Endothelial cell of umbilical vein (primary cell): ENCODE measurements at regions of chr20 and their contacts with region 1.

Region 1: DNA sequence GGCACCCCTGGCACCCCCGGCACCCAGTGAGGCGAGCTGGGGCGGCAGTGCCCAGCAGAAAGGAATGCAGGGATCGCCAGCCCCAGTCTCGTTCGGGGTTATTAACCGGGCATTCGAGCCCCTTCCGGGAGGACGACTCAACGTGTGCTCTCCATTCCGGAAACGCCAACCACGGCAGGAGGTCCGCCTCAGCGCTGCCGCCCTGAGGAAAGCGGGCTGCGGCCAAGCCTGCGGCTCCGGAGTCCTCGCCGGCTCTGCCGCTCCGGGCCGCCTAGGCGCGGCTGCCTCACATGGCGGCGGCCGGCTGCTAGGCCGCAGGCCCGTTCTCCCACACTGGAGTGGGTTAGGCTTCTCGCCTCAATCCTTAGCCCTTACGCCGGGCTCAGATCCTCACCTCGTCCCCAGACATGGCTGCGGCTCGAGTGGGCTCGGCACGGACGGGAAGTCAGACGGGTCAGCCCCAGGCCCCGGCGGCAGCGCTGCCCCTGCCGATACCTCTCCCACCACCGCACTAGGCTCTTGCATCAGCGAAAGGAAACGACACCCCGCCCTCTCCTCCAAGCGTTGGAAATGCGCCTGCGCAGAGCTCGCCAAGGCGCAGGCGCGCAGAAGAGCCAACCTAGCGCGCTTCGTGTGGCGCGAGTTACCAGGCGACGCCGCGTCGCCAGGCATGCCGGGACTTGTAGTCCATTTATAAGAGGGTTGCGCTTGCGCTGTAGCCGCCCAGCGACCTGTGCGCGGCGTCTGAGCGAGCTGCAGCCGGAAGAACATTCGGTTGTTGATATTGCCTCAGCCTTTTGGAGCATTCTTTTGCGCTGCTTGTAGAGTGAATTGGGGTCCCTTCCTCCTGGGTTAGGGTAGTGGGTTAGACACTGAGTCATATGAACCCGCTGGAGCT is at the start of gene EIF2S2:
- DNase-seq: peak; percentile 99
- H3K4me3 ChIP-seq: peak within 1 kb of the TSS; percentile 69 to 95 (median 93)
- H3K27ac ChIP-seq: peak within 1 kb of the TSS; percentile 78
- H3K4me1 ChIP-seq: peaks cover 27% of the 10 kb centered on the region
- H3K27me3 ChIP-seq: no peaks in the 10 kb centered on the region
- CTCF ChIP-seq: no peak
- POLR2A ChIP-seq: peak; percentile 97
- total RNA-seq, gene EIF2S2: 99.3 and 102 TPM in 2 replicates

Region 2: DNA sequence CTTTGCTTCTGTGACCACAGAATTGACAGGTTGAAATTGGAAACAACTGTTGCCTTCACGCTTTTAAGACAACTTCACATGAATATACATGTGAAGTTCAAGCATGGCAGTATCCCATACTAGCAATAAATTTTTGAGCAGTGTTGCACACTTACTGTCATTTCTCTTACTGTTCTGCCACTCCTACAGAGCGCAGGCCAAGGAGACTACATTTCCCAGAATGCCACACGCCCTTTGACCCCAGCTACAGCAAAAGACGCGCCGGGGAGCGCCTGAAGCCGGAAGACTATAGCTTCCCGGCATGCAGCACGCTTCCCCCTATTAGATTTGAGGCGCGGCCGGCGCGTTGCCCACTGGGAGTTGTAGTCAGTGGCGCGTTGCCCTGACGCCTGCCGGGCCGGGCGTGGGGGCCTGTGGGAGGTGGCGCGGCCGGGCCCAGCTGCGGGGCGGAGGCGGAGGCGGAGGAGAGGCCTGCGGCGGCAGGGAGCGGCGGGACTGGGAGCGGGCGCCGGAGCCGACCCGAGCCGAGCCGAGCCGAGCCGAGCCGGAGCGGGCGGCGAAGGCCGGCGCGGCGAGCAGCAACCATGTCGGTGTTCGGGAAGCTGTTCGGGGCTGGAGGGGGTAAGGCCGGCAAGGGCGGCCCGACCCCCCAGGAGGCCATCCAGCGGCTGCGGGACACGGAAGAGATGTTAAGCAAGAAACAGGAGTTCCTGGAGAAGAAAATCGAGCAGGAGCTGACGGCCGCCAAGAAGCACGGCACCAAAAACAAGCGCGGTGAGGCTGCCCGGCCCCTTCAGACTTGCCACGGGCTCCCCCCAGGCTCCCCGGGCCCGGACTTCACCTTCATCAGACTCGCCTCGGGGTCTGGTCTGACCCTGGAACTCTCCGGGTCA is 300.8 kb before region 1 on chr20 and contains the start of gene CHMP4B:
- CTCF ChIA-PET with region 1: no interaction called
- POLR2A ChIA-PET with region 1: interaction called, 4 read pairs
- dilution Hi-C with region 1: no loop called
- intact Hi-C with region 1: loop called (anchors 1 kb)
- DNase-seq: peak; percentile 98
- H3K4me3 ChIP-seq: peak within 1 kb of the TSS; percentile 60 to 86 (median 83)
- H3K27ac ChIP-seq: peak within 1 kb of the TSS; percentile 96
- H3K4me1 ChIP-seq: peaks cover 23% of the 10 kb centered on the region
- H3K27me3 ChIP-seq: no peaks in the 10 kb centered on the region
- CTCF ChIP-seq: no peak
- POLR2A ChIP-seq: peak; percentile 69
- total RNA-seq, gene CHMP4B: 105 and 112 TPM in 2 replicates

Region 3: DNA sequence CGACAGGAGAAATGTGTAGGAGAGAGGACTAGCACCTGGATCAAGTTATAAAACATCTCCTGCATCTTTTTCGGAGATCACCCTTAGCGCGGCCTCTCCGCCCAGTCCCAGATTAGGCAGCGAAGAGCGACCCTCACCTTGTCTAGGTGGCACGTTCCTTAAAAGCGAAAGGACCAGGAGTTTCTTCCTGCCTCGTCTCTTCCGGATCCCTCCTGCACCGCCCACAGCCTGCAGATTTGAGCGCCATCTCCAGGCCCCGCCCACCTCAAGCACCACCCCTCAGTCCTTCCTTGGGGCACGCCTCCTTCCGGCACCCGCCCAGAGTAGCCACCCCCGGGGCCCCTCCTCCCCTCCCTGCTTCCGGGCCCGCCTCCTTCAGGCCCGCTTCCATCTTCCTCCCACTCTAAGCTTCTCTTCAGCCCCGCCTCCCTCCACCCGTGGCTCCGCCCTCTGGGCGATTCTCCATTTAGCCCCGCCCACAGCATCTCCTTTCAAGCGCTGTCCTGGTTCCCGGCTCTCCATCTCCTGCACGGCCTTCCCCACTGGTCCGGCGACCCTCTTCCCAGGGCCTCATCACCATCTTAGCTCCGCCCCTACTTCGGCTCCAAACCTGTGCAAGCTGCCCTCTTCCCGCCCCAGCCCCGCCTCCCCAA is 118.9 kb before region 1 on chr20:
- CTCF ChIA-PET with region 1: no interaction called
- POLR2A ChIA-PET with region 1: interaction called, 13 read pairs
- dilution Hi-C with region 1: no loop called
- intact Hi-C with region 1: loop called (anchors 1 kb)
- DNase-seq: peak; percentile 100
- H3K4me3 ChIP-seq: peak overlapping the region; percentile 92 to 99 (median 96)
- H3K27ac ChIP-seq: peak overlapping the region; percentile 86
- H3K4me1 ChIP-seq: peaks cover 19% of the 10 kb centered on the region
- H3K27me3 ChIP-seq: no peaks in the 10 kb centered on the region
- CTCF ChIP-seq: no peak
- POLR2A ChIP-seq: peak; percentile 96

Region 4: DNA sequence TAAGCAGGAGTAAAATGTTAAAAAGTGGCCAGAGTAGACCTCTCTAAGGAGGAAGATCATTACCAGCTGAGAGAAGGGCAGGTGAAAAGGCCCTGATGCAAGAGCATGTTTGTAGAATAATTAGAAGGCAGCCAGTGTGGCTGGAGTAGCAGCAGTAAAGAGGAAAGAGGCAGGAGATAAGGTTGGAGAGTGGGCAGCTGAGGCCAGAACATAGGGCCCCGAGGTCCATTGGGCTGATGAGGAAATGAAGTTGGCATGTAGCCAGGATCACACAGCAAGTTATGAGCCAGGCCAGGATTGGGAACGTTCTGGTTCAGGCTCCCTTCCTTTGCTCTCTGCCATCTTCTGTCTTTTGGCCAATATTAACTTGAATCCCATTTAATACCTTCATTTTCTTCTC is 66.7 kb before region 1 on chr20:
- CTCF ChIA-PET with region 1: no interaction called
- POLR2A ChIA-PET with region 1: no interaction called
- dilution Hi-C with region 1: no loop called
- intact Hi-C with region 1: no loop called
- DNase-seq: peak; percentile 17
- H3K4me3 ChIP-seq: no peak overlapping the region
- H3K27ac ChIP-seq: no peak overlapping the region
- H3K4me1 ChIP-seq: peaks cover 4% of the 10 kb centered on the region
- H3K27me3 ChIP-seq: no peaks in the 10 kb centered on the region
- CTCF ChIP-seq: no peak
- POLR2A ChIP-seq: no peak

Region 5: GRCh38 chr20:34091637-34092200 is 20.2 kb before region 1 on chr20:
- CTCF ChIA-PET with region 1: interaction called, 6 read pairs
- POLR2A ChIA-PET with region 1: interaction called, 11 read pairs
- dilution Hi-C with region 1: no loop called
- intact Hi-C with region 1: no loop called
- DNase-seq: no peak
- H3K4me3 ChIP-seq: no peak overlapping the region
- H3K27ac ChIP-seq: no peak overlapping the region
- H3K4me1 ChIP-seq: no peaks in the 10 kb centered on the region
- H3K27me3 ChIP-seq: no peaks in the 10 kb centered on the region
- CTCF ChIP-seq: no peak
- POLR2A ChIP-seq: no peak

Region 6: GRCh38 chr20:34122274-34122980 is 10.5 kb after region 1 on chr20:
- CTCF ChIA-PET with region 1: interaction called, 14 read pairs
- POLR2A ChIA-PET with region 1: interaction called, 4 read pairs
- dilution Hi-C with region 1: no loop called
- intact Hi-C with region 1: no loop called
- DNase-seq: no peak
- H3K4me3 ChIP-seq: no peak overlapping the region
- H3K27ac ChIP-seq: no peak overlapping the region
- H3K4me1 ChIP-seq: peaks cover 10% of the 10 kb centered on the region
- H3K27me3 ChIP-seq: peaks cover 0 to 7% of the 10 kb centered on the region in 2 experiments
- CTCF ChIP-seq: no peak
- POLR2A ChIP-seq: no peak

Region 7: DNA sequence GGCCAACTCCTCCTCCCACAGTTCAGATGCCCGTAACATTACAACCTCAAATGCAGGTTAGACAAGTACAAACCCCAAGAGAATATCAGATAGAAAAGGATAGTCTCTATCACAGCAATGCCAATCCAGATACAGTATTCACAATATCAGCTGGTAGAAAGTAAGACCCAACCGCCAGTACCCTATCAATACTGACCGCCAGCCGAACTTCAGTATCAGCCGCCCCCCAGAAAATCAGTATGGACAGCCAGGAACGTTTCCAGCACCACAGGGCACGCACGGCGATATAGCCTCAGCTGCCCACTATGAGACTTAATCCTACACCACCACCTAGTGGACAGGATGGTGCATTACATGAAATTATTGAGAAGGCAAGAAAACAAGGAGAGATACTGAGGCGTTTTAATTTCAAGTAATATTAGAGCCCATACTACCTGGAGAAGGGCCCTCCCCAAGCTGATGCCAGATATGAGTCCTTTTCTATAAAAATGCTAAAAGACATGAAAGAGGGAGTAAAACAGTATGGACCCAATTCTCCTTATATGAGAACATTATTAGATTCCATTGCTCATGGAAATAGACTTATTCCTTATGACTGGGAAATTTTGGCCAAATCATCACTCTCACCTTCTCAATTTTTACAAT is 17.7 kb after region 1 on chr20:
- CTCF ChIA-PET with region 1: interaction called, 15 read pairs
- POLR2A ChIA-PET with region 1: interaction called, 4 read pairs
- dilution Hi-C with region 1: no loop called
- intact Hi-C with region 1: loop called (anchors 2 kb)
- DNase-seq: peak; percentile 78
- H3K4me3 ChIP-seq: no peak overlapping the region
- H3K27ac ChIP-seq: no peak overlapping the region
- H3K4me1 ChIP-seq: peaks cover 3% of the 10 kb centered on the region
- H3K27me3 ChIP-seq: no peaks in the 10 kb centered on the region
- CTCF ChIP-seq: peak; percentile 61 to 76
- POLR2A ChIP-seq: no peak